ENCODE measurements at regions of chr12 and their contacts with region 1.

Region 1: GRCh38 chr12:6360578-6361490 is 14.5 kb downstream of the SCNN1A start:
- DNase-seq: peak; percentile 49
- H3K4me3 Mint-ChIP-seq: no peak overlapping the region
- H3K27ac Mint-ChIP-seq: peak overlapping the region; percentile 16
- H3K4me1 Mint-ChIP-seq: peaks cover 19% of the 10 kb centered on the region
- H3K27me3 Mint-ChIP-seq: no peaks in the 10 kb centered on the region

Region 2: DNA sequence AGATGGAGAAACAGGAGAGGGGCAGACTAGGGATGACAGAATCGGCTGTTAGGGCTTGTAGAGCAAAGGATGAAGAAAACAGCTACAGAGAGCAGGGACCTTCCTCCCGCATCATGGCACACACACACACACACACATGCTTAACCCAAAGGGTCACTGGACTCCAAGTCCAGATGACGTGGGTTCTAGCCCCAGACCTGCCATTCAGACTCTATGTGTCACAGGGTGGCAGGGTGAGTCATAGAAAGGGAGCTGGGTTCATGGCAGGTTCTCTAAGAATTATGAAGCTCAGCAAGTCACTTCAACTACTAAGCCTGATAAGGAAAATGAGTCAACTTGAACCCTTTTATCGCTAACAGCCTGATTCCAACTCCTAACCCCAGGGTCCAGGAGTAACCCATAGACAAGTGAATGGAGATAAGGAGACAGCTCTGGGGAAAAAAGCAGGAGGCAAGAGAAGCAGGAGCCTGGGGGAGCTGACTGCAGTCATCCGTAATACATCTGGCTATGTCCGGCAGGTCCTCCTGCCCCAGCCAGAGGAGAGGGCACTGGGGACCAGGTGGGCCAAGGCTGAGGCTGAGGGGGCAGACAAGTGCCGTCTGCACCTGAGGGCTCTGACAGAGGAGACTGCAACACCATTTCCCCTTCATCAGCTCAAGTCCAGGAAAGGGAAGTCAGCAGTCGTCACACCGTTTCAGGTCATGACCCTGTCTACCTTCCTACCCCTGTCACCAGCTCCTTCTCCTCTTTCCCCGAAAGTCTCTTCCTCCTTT is 15.3 kb before region 1 on chr12:
- CTCF ChIA-PET with region 1: interaction called, 8 read pairs
- POLR2A ChIA-PET with region 1: interaction called, 6 read pairs
- intact Hi-C with region 1: loop called (anchors 1 kb)
- DNase-seq: peak; percentile 83
- H3K4me3 Mint-ChIP-seq: no peak overlapping the region
- H3K27ac Mint-ChIP-seq: peak overlapping the region; percentile 73
- H3K4me1 Mint-ChIP-seq: peaks cover 44% of the 10 kb centered on the region
- H3K27me3 Mint-ChIP-seq: no peaks in the 10 kb centered on the region